ENCODE measurements at regions of chr12 and their contacts with region 1.

Region 1: GRCh38 chr12:83856803-83857202 is 1055.8 kb downstream of the SLC6A15 start:
- DNase-seq: no peak
- ATAC-seq: no peak
- H3K4me3 ChIP-seq: no peak overlapping the region
- H3K4me3 Mint-ChIP-seq: no peak overlapping the region
- H3K27ac ChIP-seq: no peak overlapping the region
- H3K27ac Mint-ChIP-seq: no peak overlapping the region
- H3K4me1 ChIP-seq: no peaks in the 10 kb centered on the region
- H3K4me1 Mint-ChIP-seq: no peaks in the 10 kb centered on the region
- H3K27me3 ChIP-seq: no peaks in the 10 kb centered on the region
- H3K27me3 Mint-ChIP-seq: no peaks in the 10 kb centered on the region

Region 2: GRCh38 chr12:83323866-83324265 is 532.9 kb before region 1 on chr12:
- CTCF ChIA-PET with region 1: no interaction called
- POLR2A ChIA-PET with region 1: interaction called in 1 of 2 experiments, 16 read pairs
- DNase-seq: no peak
- ATAC-seq: no peak
- H3K4me3 ChIP-seq: no peak overlapping the region
- H3K4me3 Mint-ChIP-seq: no peak overlapping the region
- H3K27ac ChIP-seq: no peak overlapping the region
- H3K27ac Mint-ChIP-seq: no peak overlapping the region
- H3K4me1 ChIP-seq: no peaks in the 10 kb centered on the region
- H3K4me1 Mint-ChIP-seq: no peaks in the 10 kb centered on the region
- H3K27me3 ChIP-seq: no peaks in the 10 kb centered on the region
- H3K27me3 Mint-ChIP-seq: no peaks in the 10 kb centered on the region

Measured in T-cell (primary cell).